ENCODE measurements at regions of chr1 and their contacts with region 1.

Region 1: DNA sequence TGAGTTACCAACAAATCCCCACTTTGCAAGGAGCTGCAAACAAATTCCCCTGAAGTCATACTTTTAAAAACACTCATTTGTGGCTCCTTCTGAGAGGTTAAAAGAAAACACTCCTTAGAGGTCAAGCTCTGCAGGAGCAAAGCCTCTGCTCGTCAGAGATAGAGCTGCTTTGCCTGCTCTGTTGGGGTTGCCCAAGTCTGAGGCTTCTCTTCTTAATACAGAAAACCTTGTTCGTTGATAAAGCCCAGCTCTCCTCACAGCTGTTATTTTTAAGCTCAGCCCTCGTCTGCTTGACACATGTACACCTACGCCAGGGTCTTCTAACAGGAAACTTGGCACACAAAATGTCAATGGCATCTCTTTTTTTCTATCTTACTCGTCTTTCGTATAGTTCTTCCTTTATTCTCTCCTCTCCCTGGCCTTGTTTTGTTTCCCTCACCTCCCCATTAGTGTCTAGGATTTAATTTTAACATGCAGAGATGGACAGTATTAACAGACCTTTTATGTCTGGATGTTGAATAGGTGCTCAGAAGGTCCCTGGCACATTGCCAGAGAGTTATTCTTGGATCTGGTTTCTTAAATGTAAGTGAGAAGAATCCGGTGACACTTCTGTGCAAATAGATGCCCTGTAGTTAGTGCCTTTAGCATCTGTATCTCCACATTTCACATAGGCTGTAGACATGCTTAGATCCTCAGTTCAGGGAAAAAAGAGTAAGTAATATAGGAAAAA is 86.0 kb downstream of the LRRC53 start:
- DNase-seq: no peak
- ATAC-seq: peak; percentile 17 to 53 (median 44)
- H3K4me3 ChIP-seq: no peak overlapping the region
- H3K27ac ChIP-seq: peak overlapping the region; percentile 17 to 78 (median 62)
- H3K4me1 ChIP-seq: peaks cover 0 to 31% (median 5%) of the 10 kb centered on the region in 12 donors
- H3K27me3 ChIP-seq: no peaks in the 10 kb centered on the region
- CTCF ChIP-seq: no peak
- POLR2A ChIP-seq: no peak

Region 2: GRCh38 chr1:74380252-74380651 is 46.1 kb before region 1 on chr1:
- intact Hi-C with region 1: loop called in 1 of 10 experiments (anchors 5 kb)
- DNase-seq: no peak
- ATAC-seq: peak; percentile 42 to 76 (median 74)
- H3K4me3 ChIP-seq: no peak overlapping the region
- H3K27ac ChIP-seq: peak overlapping the region in 10 of 12 donors; percentile 7 to 56 (median 42)
- H3K4me1 ChIP-seq: peaks cover 0 to 34% (median under 1%) of the 10 kb centered on the region in 12 donors
- H3K27me3 ChIP-seq: no peaks in the 10 kb centered on the region
- CTCF ChIP-seq: no peak
- POLR2A ChIP-seq: no peak